Activated CD8-positive, alpha-beta T cell treated with anti-CD3 and anti-CD28 coated beads, Interleukin-2, amount 10 ng/mL, durations not matched to agents 7 days and 5 days (primary cell): ENCODE measurements at regions of chr12 and their contacts with region 1.

Region 1: GRCh38 chr12:56104109-56104814 is at the start of gene PA2G4:
- DNase-seq: peak; percentile 99
- ATAC-seq: peak; percentile 94
- H3K4me3 Mint-ChIP-seq: peak within 1 kb of the TSS; percentile 100
- H3K27ac Mint-ChIP-seq: peak within 1 kb of the TSS; percentile 98
- H3K4me1 Mint-ChIP-seq: peaks cover 64% of the 10 kb centered on the region
- H3K27me3 Mint-ChIP-seq: no peaks in the 10 kb centered on the region
- total RNA-seq, gene PA2G4: 316 to 323 TPM

Region 2: DNA sequence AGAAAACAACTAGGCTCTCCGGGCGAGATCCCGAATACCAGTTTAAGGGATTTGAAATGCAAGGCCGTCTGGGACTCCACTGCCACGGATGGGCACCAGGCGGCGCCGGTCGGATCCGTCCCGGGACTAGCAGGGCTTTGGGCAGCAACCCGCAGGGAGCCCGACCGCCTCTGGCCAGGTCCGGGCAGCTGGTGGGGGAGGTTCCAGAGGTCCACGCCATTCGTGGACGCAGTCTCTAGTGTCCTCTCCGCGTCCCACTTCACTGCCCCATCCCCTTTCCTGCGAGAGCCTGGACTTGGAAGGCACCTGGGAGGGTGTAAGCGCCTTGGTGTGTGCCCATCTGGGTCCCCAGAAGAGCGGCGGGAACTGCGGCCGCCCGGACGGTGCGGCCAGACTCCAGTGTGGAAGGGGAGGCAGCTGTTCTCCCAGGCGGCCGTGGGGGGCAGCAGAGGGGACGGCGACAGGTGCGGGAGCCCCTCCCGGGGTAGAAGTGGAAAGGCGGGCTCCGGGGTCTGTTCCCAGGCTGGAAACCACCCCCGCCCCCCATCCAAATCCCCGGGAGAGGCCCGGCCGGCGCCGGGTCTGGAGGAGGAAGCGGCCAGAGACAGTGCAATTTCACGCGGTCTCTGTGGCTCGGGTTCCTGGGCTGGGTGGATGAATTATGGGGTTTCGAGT is 25.1 kb before region 1 on chr12:
- CTCF ChIA-PET with region 1: interaction called, 45 read pairs
- POLR2A ChIA-PET with region 1: interaction called, 26 read pairs
- DNase-seq: peak; percentile 64
- ATAC-seq: peak; percentile 66
- H3K4me3 Mint-ChIP-seq: peak overlapping the region; percentile 79
- H3K27ac Mint-ChIP-seq: peak overlapping the region; percentile 43
- H3K4me1 Mint-ChIP-seq: peaks cover 21% of the 10 kb centered on the region
- H3K27me3 Mint-ChIP-seq: peaks cover 23% of the 10 kb centered on the region

Region 3: DNA sequence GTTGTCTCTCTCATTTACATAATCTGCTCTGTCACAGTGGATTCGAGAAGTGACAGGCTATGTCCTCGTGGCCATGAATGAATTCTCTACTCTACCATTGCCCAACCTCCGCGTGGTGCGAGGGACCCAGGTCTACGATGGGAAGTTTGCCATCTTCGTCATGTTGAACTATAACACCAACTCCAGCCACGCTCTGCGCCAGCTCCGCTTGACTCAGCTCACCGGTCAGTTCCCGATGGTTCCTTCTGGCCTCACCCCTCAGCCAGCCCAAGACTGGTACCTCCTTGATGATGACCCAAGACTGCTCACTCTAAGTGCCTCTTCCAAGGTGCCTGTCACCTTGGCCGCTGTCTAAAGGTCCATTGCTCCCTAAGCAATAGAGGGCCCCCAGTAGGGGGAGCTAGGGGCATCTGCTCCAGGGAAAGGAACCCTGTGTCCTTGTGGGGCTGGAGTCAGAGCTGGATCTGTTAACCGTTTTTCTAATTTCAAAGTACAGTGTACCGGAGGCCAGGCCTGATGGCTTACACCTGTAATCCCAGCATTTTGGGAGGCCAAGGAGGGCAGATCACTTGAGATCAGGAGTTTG is 19.2 kb before region 1 on chr12:
- CTCF ChIA-PET with region 1: interaction called, 45 read pairs
- POLR2A ChIA-PET with region 1: interaction called, 26 read pairs
- DNase-seq: peak; percentile 59
- ATAC-seq: peak; percentile 79
- H3K4me3 Mint-ChIP-seq: no peak overlapping the region
- H3K27ac Mint-ChIP-seq: no peak overlapping the region
- H3K4me1 Mint-ChIP-seq: peaks cover 30% of the 10 kb centered on the region
- H3K27me3 Mint-ChIP-seq: peaks cover 19% of the 10 kb centered on the region

Region 4: DNA sequence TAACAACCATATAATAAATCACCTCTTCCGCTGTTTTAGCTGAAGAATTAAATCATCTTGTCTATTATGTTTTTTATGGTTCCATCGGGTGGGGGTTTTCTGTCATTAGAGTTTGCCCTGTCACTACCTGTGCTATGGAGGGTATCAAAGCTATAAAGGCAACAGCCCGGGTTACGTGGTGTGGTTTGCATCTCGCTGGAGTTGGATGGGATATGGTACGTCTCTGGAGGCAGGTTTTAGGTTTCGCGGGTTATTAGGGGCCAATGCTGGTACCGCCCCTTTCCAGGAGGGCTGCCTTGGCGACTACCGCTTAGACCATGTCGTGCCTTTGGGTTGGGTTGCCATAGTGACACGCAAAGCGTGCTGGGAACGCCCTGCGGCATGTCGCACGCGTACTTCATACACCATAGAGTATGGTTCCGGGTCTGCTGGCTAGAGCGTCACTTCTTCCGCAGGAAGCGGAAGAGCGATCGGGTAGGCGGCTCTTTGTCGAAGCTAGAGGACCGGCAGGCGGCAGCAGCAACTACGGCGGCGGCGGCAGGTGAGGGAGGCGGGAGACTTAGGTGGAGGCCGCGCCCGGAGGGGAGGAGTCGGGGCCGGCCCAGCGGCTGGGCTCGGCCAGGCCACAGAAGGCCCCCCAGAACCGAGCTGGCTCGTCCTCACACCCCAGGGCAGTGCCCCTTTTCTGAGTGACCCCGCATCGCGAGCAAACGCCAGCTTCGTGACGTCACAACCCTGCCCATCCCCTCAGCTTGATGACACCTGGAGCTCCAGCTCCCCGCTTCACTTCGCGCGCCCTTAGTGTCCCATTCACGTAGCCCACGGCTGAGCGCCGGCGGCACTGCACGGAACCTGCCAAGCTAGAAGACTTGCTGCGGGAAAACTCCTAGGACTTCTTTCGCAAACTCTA is 13.8 kb after region 1 on chr12 and contains the start of gene ZC3H10:
- CTCF ChIA-PET with region 1: interaction called, 40 read pairs
- POLR2A ChIA-PET with region 1: interaction called, 105 read pairs
- DNase-seq: peak; percentile 100
- ATAC-seq: peak; percentile 76
- H3K4me3 Mint-ChIP-seq: peak within 1 kb of the TSS; percentile 100
- H3K27ac Mint-ChIP-seq: peak within 1 kb of the TSS; percentile 100
- H3K4me1 Mint-ChIP-seq: peaks cover 39% of the 10 kb centered on the region
- H3K27me3 Mint-ChIP-seq: no peaks in the 10 kb centered on the region
- total RNA-seq, gene ZC3H10: 9.1 to 10.6 TPM

Region 5: GRCh38 chr12:56165369-56165768 is 61.1 kb after region 1 on chr12:
- CTCF ChIA-PET with region 1: no interaction called
- POLR2A ChIA-PET with region 1: no interaction called
- DNase-seq: no peak
- ATAC-seq: no peak
- H3K4me3 Mint-ChIP-seq: no peak overlapping the region
- H3K27ac Mint-ChIP-seq: no peak overlapping the region
- H3K4me1 Mint-ChIP-seq: peaks cover 21% of the 10 kb centered on the region
- H3K27me3 Mint-ChIP-seq: no peaks in the 10 kb centered on the region

Region 6: GRCh38 chr12:56315622-56316473 is 211.6 kb after region 1 on chr12 and contains the start of gene CNPY2:
- CTCF ChIA-PET with region 1: no interaction called
- POLR2A ChIA-PET with region 1: no interaction called
- DNase-seq: peak; percentile 98
- ATAC-seq: peak; percentile 96
- H3K4me3 Mint-ChIP-seq: peak within 1 kb of the TSS; percentile 99
- H3K27ac Mint-ChIP-seq: peak within 1 kb of the TSS; percentile 98
- H3K4me1 Mint-ChIP-seq: peaks cover 16% of the 10 kb centered on the region
- H3K27me3 Mint-ChIP-seq: no peaks in the 10 kb centered on the region
- total RNA-seq, gene CNPY2: 112 to 113 TPM